ENCODE measurements at regions of chr2 and their contacts with region 1.

Region 1: GRCh38 chr2:196171248-196171871 is at the start of gene STK17B:
- DNase-seq: peak; percentile 96
- CTCF ChIP-seq: no peak

Region 2: DNA sequence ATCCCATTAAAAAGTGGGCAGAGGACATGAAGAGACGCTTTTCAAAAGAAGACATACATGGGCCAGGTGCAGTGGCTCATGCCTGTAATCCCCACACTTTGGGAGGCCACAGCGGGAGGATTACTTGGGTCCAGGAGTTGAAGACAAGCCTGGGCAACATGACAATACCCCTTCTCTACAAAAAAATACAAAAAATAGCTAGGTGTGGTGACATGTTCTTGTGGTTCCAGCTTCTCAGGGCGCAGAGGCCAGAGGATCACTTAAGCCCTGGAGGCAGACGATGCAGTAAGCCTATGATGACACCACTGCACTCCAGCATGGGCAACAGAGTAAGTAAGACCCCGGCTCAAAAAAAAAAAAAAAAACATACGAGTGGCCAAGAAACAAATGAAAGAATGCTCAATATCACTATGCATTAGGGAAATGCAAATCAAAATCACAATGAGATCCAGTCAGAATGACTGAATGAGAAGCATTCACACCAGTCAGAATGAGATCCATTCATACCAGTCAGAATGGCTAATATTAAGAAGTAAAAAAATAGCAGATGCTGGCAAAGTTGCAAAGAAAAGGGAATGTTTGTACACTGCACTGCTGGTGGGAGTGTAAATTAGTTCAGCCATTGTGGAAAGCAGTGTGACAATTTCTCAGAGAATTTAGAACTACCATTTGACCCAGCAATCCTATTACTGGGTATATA is 1064.5 kb before region 1 on chr2:
- in situ Hi-C with region 1: no loop called
- DNase-seq: no peak
- CTCF ChIP-seq: no peak

Region 3: DNA sequence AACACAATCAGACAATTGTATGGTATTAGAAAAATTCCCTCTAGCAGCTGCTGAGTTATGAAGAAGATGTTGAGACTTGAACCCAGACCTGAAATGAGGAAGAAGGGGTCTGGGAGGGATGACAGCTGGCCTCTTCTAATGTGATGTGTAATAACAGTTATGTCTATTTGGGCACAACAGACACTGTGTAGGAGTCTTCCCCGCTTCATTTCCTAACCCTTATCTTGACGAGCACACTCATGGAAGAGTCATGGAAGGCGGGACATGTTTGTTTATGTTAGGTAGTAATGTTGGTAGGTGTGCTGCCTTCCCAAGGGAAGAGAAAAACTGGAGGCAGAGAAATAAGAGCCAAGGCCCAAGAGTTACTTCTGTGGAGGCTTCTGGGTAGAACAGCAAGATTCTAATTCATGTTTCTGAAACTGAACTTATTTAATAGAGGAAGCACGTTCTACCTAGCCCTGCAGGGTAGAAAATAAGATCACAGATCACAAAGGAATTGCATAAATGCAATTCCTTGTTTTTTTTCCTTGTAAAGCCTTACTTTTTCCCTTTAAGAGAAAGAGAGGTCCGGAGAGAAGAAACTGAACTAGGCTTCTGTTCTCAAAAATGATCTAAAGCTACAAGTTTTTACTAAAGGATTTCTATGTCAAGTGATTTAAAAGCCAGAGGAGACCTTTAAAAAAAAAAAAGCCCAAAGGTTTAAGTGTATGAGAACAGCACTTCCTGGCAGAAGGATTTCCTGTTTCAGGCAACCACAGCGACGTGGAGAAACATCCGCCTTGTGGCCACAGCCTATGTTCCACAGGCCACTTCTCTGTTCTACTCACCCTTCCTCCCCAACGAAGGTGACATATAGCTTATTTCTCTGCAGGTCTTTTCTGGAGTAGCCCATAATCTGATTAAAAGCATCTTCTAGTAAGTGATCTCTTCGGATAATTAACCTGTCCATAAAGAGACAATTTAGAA is 68.5 kb after region 1 on chr2:
- in situ Hi-C with region 1: loop called (anchors 10 kb)
- DNase-seq: peak; percentile 55
- CTCF ChIP-seq: peak; percentile 3

Region 4: GRCh38 chr2:196277002-196277401 is 105.6 kb after region 1 on chr2:
- in situ Hi-C with region 1: loop called (anchors 10 kb)
- DNase-seq: peak; percentile 57
- CTCF ChIP-seq: peak; percentile 41

Region 5: DNA sequence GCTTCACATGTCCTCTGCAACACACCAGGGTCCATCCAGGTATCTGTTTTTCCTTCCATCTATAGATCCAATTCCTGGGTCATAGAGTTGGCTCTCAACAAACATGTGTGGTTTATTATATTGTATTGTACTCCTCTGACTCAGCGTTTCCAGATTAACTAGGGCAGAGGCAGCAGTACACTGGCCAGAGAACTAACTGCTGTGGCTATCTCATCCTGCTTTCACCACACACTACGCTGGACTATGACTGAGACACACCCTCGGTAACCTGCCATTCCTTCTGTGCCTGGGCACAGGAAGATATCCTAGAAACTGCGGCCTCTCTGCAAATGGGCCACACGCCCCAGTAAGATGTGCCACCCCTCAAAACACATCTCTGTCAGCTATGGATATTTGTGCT is 159.8 kb after region 1 on chr2:
- in situ Hi-C with region 1: no loop called
- DNase-seq: no peak
- CTCF ChIP-seq: no peak

Region 6: GRCh38 chr2:196528486-196529223 is 357.3 kb after region 1 on chr2:
- in situ Hi-C with region 1: no loop called
- DNase-seq: peak; percentile 39
- CTCF ChIP-seq: no peak